GM12878 (cell line): ENCODE measurements at regions of chr10 and their contacts with region 1.

Region 1: DNA sequence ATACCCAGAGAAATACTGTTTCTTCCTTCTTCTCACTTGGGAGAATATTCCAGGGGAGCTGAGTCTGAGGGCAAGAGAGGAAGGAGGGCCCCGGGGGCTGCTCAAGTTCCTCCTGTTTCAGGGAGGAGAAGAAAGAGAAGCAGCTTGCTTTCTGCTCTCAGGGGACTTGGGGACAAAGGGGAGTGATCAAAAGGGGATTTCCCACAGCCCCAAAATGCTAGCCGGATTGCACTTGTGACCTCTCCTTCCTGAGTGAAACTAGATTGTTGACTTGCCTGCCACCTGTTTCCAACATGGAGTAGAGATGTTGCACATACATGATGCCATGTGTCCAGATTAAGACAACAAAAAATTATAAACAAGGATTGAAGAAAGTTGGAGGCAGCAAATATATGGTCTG is 28.7 kb upstream of the PDCD4 start:
- DNase-seq: peak; percentile 98
- ATAC-seq: peak; percentile 74
- H3K4me3 ChIP-seq: peak overlapping the region; percentile 68
- H3K27ac ChIP-seq: peak overlapping the region; percentile 97
- H3K4me1 ChIP-seq: peaks cover 53% of the 10 kb centered on the region
- H3K27me3 ChIP-seq: no peaks in the 10 kb centered on the region
- CTCF ChIP-seq: no peak
- EP300 ChIP-seq: peak; percentile 53 to 91; a peak in 3 of 4 replicates
- POLR2A ChIP-seq: no peak; the same call in 1 of the 2 replicates
- RAD21 ChIP-seq: peak; percentile 37; the same call in 1 of the 2 replicates

Region 2: DNA sequence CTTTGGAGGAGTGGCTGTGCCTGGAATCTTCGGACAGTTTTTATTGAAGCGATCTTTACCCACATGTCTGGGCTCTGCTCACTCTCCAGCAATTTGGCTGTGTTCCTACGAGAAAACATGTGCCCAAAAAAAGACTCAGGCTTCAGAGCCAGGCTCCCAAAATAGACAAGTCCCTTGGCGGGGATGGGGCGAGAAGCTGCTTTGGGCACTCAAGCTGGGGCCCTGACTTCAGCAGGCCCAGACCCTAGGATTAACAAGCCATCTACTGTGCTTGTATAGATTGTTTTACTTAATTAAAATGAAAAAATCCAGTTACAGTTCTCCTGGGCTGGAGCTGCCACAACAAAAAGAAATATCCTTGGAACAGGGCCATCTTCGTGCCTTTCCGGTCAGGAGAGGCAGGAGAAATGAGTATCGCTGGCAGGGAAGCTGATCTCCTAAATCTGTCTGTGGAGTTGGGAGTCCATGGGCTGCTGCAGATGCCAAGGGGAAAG is 22.7 kb before region 1 on chr10:
- CTCF ChIA-PET with region 1: interaction called, 7 read pairs
- POLR2A ChIA-PET with region 1: interaction called, 9 read pairs
- RAD21 ChIA-PET with region 1: interaction called, 24 read pairs
- SMC1A ChIA-PET with region 1: interaction called, 57 read pairs
- in situ Hi-C with region 1: no loop called
- intact Hi-C with region 1: no loop called
- DNase-seq: no peak
- ATAC-seq: no peak
- H3K4me3 ChIP-seq: no peak overlapping the region
- H3K27ac ChIP-seq: no peak overlapping the region
- H3K4me1 ChIP-seq: peaks cover 27% of the 10 kb centered on the region
- H3K27me3 ChIP-seq: no peaks in the 10 kb centered on the region
- CTCF ChIP-seq: no peak
- EP300 ChIP-seq: no peak
- POLR2A ChIP-seq: no peak
- RAD21 ChIP-seq: no peak

Region 3: DNA sequence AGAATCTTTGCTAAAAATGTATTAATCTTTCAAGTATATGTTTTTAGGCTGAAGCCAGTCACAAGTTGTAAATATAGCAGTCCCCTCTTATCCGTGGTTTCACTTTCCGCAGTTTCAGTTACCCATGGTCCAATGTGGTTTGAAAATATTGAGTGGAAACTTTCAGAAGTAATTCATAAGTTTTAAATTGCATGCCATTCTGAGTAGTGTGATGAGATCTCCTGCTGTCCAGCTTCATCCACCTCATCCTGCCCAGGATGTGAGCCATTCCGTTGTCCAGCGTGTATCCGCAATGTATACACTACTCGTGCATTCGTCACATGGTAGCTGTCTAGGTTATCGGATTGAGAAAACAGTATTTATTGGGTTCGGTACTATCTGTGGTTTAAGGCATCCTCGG is 40.9 kb after region 1 on chr10:
- CTCF ChIA-PET with region 1: interaction called, 5 read pairs
- POLR2A ChIA-PET with region 1: interaction called, 7 read pairs
- RAD21 ChIA-PET with region 1: interaction called, 17 read pairs
- SMC1A ChIA-PET with region 1: interaction called, 41 read pairs
- in situ Hi-C with region 1: no loop called
- intact Hi-C with region 1: no loop called
- DNase-seq: no peak
- ATAC-seq: peak; percentile 5; the same call in 2 of the 3 replicates
- H3K4me3 ChIP-seq: no peak overlapping the region; the same call in 1 of the 2 replicates
- H3K27ac ChIP-seq: no peak overlapping the region
- H3K4me1 ChIP-seq: peaks cover 6% of the 10 kb centered on the region
- H3K27me3 ChIP-seq: no peaks in the 10 kb centered on the region
- CTCF ChIP-seq: no peak
- EP300 ChIP-seq: no peak
- POLR2A ChIP-seq: no peak
- RAD21 ChIP-seq: no peak

Region 4: GRCh38 chr10:110893559-110894179 is 50.6 kb after region 1 on chr10:
- CTCF ChIA-PET with region 1: interaction called, 13 read pairs
- POLR2A ChIA-PET with region 1: interaction called, 3 read pairs
- RAD21 ChIA-PET with region 1: interaction called, 7 read pairs
- SMC1A ChIA-PET with region 1: interaction called, 25 read pairs
- in situ Hi-C with region 1: no loop called
- intact Hi-C with region 1: no loop called
- DNase-seq: no peak
- ATAC-seq: peak; percentile 93
- H3K4me3 ChIP-seq: no peak overlapping the region
- H3K27ac ChIP-seq: no peak overlapping the region
- H3K4me1 ChIP-seq: no peaks in the 10 kb centered on the region
- H3K27me3 ChIP-seq: no peaks in the 10 kb centered on the region
- CTCF ChIP-seq: peak; percentile 34 to 52 (median 44); a peak in 4 of 6 replicates
- EP300 ChIP-seq: no peak
- POLR2A ChIP-seq: no peak
- RAD21 ChIP-seq: peak; percentile 66